Mammary epithelial cell (primary cell): ENCODE measurements at regions of chr1 and their contacts with region 1.

Region 1: GRCh38 chr1:35930593-35931445 is at the start of gene AGO3:
- DNase-seq: peak; percentile 91
- H3K4me3 ChIP-seq: peak within 1 kb of the TSS; percentile 73 to 92 (median 80)
- H3K27ac ChIP-seq: peak within 1 kb of the TSS; percentile 87
- H3K4me1 ChIP-seq: peaks cover 15% of the 10 kb centered on the region
- H3K27me3 ChIP-seq: no peaks in the 10 kb centered on the region
- CTCF ChIP-seq: no peak
- total RNA-seq, gene AGO3: 19.8 to 21.7 TPM

Region 2: GRCh38 chr1:36088575-36089443 is 158.0 kb after region 1 on chr1 and contains the start of gene ADPRS:
- CTCF ChIA-PET with region 1: no interaction called
- dilution Hi-C with region 1: no loop called
- in situ Hi-C with region 1: no loop called
- intact Hi-C with region 1: loop called (anchors 2 kb)
- DNase-seq: peak; percentile 83
- H3K4me3 ChIP-seq: peak within 1 kb of the TSS; percentile 79 to 96 (median 89)
- H3K27ac ChIP-seq: peak within 1 kb of the TSS; percentile 74
- H3K4me1 ChIP-seq: peaks cover 22% of the 10 kb centered on the region
- H3K27me3 ChIP-seq: no peaks in the 10 kb centered on the region
- CTCF ChIP-seq: peak; percentile 86 to 99
- total RNA-seq, gene ADPRS: 33.7 to 34.3 TPM

Region 3: DNA sequence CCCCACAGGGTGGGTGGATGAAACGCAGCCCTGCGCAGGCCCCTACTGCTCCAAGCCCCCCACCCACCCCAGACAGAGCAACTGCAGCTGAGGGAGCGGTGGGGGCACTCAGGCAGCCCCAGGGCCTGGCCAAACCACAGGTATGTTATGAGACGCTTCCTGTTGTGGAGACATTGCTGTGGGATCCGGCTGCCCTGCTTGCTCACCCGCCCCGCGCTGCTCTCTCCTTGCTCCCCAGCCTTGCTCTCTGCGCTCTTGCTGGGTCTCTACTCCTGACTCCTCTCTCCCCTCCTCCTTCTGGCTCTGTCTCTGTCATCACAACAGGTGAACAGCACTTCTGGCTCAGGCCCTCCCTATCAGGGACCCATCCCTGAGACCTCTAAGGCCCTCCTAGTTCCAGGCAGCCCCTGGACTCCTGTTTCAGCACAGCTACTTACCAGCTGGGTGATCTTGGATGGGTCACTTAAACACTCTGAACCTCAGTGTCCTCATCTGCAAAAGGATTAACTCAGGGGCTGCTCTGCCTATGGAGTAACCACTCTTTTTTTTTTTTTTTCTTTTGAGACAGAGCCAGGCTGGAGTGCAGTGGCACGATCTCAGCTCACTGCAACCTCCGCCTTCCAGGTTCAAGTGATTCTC is 178.3 kb after region 1 on chr1:
- CTCF ChIA-PET with region 1: no interaction called
- dilution Hi-C with region 1: no loop called
- in situ Hi-C with region 1: no loop called
- intact Hi-C with region 1: no loop called
- DNase-seq: peak; percentile 76
- H3K4me3 ChIP-seq: no peak overlapping the region
- H3K27ac ChIP-seq: peak overlapping the region; percentile 39
- H3K4me1 ChIP-seq: peaks cover 24% of the 10 kb centered on the region
- H3K27me3 ChIP-seq: no peaks in the 10 kb centered on the region
- CTCF ChIP-seq: no peak